ENCODE measurements at regions of chr4 and their contacts with region 1.

Region 1: GRCh38 chr4:22334155-22334554 is 181.7 kb downstream of the ADGRA3 start:
- DNase-seq: no peak

Region 2: DNA sequence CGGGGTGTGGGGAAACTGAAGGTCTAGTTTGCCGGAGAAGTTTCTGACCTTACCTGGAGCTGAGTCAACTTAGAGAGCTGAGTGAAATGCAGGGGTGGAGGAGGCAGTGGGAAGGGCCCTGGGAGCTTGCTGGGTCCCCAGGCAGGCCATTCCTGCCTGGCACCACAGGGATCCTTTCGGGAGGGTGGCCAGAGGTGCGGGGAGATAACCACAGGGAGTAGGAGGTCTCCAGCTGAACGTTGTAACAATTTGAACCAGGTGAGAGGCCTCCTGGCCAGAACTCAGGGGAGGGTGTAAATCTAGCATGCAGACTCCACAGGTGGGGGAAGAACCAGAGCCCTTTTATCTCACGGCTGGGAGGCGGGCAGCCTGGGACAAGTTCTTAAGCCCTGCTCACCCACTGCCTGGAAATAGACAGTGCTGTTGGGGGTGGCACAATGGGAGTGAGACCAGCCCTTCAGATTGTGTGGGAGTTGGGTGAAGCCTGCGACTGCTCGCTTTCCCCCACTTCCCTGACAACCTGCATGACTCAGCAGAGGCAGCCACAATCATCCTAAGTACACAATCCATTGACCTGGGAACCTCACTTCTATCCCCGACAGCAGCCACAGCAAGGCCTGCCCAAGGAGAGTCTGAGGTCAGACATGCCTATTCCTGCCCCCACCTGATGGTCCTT is 65.7 kb before region 1 on chr4:
- in situ Hi-C with region 1: no loop called
- DNase-seq: no peak

Region 3: GRCh38 chr4:22369901-22370562 is 35.9 kb after region 1 on chr4:
- in situ Hi-C with region 1: loop called (anchors 5 kb)
- DNase-seq: peak; percentile 76

Region 4: DNA sequence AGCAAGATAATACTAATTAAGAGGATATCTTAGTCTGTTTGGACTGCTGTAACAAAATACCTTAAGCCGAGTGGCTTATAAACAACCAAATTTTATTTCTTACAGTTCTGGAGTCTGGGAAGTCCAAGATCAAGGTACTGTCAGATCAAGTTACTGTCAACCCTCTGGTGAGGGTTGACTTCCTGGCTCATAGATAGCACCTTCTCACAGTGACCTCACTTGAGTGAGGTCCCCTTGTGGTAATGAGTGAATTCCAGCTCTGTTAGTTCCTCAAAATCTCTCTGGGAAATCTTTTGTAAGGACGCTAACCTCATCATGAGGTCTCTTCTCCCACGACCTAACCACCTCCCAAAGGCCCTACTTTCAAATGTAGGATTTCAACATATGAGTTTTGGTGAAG is 218.7 kb after region 1 on chr4:
- in situ Hi-C with region 1: no loop called
- DNase-seq: no peak

Measured in G401 (cell line).